T-cell (primary cell): ENCODE measurements at regions of chr11 and their contacts with region 1.

Region 1: DNA sequence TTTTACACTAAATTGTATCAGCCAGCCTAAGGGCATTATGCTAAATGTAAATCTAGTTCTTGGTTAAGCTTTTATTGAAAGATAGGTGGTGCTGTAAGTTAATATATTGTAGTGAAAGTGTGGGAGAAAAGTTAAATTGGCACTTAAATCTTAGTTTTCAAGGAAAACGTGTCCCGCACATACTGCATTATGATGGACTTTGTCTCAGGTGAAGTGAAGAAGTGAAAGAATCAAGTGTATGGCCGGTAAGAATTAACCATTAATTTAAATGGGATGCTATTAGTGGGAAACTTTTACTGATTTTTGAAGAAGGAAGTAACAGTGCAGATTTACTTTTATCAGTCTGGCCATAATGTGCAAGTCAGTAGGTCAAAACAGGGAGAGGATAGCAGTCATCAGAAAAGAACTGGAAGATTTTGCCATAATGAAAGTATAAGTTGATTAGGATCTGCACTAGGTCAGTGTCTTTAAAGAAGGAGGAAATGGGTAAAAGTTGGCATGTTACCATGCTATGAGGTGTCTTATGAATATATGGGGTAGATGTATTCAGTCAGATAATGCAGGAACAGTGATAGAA is 81.6 kb downstream of the PDHX start:
- DNase-seq: peak in 2 of 35 experiments; percentile 14 to 52
- ATAC-seq: peak in 3 of 4 experiments; percentile 45 to 56 (median 56)
- H3K4me3 ChIP-seq: no peak overlapping the region
- H3K4me3 Mint-ChIP-seq: peak overlapping the region; percentile 7 to 52 (median 26)
- H3K27ac ChIP-seq: peak overlapping the region; percentile 13
- H3K27ac Mint-ChIP-seq: peak overlapping the region; percentile 44 to 76
- H3K4me1 ChIP-seq: peaks cover 0 to 18% of the 10 kb centered on the region in 2 experiments
- H3K4me1 Mint-ChIP-seq: peaks cover 24 to 35% (median 32%) of the 10 kb centered on the region in 3 donors
- H3K27me3 ChIP-seq: no peaks in the 10 kb centered on the region
- H3K27me3 Mint-ChIP-seq: no peaks in the 10 kb centered on the region

Region 2: DNA sequence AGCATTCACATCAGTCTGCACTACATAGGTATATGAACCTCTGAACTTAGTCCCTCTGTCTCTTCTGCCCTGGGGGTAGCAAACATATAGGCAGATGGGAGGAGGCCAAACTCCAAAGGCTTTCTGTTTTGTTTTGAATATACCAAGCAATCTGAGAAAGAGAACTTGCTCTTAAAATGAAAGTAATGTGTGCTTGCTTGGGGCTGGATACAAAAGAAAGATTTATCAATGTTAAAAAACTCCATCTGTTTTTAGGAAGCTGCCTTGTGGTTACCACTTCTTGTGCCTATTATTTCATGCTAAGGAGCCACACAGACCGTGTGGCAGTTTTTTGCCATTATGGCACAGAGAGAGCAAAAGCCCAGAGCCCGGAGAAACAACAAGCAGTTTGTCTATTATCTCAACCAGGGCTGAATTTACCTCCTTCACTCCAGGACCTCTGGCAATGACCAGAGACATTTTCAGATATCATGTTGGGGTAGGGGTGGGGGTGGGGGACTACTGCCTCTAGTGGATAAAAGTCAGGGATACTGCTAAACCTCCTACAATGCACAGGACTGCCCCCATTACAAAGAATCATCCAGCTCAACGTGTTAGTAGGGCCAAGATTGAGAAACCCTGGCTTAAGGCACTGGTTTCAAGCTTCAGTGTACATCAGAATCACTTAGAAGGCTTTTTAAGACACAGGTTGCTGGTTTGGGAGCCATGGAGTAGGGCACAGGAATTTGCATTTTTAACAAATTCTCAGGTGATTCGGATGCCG is 206.1 kb before region 1 on chr11:
- CTCF ChIA-PET with region 1: no interaction called
- POLR2A ChIA-PET with region 1: no interaction called
- DNase-seq: no peak
- ATAC-seq: peak in 1 of 4 experiments; percentile 66
- H3K4me3 ChIP-seq: no peak overlapping the region
- H3K4me3 Mint-ChIP-seq: peak overlapping the region in 1 of 3 donors; percentile 44
- H3K27ac ChIP-seq: no peak overlapping the region
- H3K27ac Mint-ChIP-seq: no peak overlapping the region
- H3K4me1 ChIP-seq: no peaks in the 10 kb centered on the region
- H3K4me1 Mint-ChIP-seq: peaks cover 1 to 17% (median 3%) of the 10 kb centered on the region in 3 donors
- H3K27me3 ChIP-seq: peaks cover 0 to 3% of the 10 kb centered on the region in 2 experiments
- H3K27me3 Mint-ChIP-seq: peaks cover 10 to 12% of the 10 kb centered on the region in 2 donors

Region 3: DNA sequence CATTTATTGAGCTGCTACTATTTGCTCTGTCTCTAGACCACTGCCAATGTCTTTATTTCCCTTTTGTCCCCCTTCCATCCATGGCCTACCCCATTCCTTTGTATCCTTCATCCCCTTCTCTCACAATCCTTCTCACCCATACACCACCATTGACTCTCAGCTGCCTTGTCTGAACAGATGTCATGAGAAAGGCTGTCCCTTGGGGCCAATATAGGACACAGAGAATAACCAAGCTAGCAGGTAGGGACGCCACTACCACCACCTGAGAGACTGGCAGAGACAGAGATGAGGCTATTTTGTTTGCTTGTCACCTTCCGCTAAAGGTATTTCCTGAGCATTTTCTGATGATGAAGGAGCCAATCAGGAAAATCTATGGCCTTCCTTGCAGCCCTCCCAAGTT is 279.8 kb after region 1 on chr11:
- CTCF ChIA-PET with region 1: no interaction called
- POLR2A ChIA-PET with region 1: interaction called in 1 of 2 experiments, 10 read pairs
- DNase-seq: no peak
- ATAC-seq: no peak
- H3K4me3 ChIP-seq: no peak overlapping the region
- H3K4me3 Mint-ChIP-seq: no peak overlapping the region
- H3K27ac ChIP-seq: no peak overlapping the region
- H3K27ac Mint-ChIP-seq: no peak overlapping the region
- H3K4me1 ChIP-seq: peaks cover 0 to 5% of the 10 kb centered on the region in 2 experiments
- H3K4me1 Mint-ChIP-seq: peaks cover 20 to 40% (median 36%) of the 10 kb centered on the region in 3 donors
- H3K27me3 ChIP-seq: no peaks in the 10 kb centered on the region
- H3K27me3 Mint-ChIP-seq: no peaks in the 10 kb centered on the region